ENCODE measurements at regions of chr5 and their contacts with region 1.

Region 1: DNA sequence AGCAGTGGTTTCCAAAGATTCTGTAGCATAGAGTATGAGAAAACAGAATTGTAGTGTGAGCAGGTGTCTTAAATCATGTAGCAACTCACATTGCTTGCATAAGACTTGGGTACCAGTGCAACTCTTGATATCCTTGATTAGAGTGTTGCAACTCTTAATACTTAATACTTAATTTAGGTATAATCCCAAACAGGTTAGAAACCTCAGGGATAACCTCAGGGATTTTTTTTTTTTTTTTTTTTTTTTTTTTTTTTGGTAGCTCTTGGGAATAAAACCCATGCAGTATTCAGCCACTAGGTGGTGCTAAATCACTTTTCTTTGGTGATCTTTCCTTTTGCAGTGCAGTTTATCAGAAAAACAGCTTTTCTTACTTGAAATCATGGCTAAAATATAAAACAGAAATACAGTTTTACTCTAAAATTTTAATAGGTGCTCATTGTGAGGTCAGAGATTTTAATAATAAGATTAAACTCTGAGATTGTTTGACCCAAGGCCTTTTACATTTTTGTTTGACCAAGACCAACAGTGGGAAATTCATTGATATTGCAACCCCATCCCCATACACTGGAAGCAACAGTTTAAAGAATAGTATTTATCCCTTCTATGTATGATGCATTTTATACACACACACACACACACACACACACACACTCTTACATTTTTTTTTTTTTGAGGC is 55.3 kb downstream of the ERAP1 start:
- DNase-seq: peak; percentile 54
- H3K4me3 Mint-ChIP-seq: no peak overlapping the region
- H3K27ac Mint-ChIP-seq: peak overlapping the region; percentile 25
- H3K4me1 Mint-ChIP-seq: peaks cover 25% of the 10 kb centered on the region
- H3K27me3 Mint-ChIP-seq: no peaks in the 10 kb centered on the region

Region 2: GRCh38 chr5:96771395-96771794 is 18.9 kb after region 1 on chr5:
- CTCF ChIA-PET with region 1: interaction called, 11 read pairs
- intact Hi-C with region 1: no loop called
- DNase-seq: no peak
- H3K4me3 Mint-ChIP-seq: no peak overlapping the region
- H3K27ac Mint-ChIP-seq: peak overlapping the region; percentile 79
- H3K4me1 Mint-ChIP-seq: peaks cover 13% of the 10 kb centered on the region
- H3K27me3 Mint-ChIP-seq: no peaks in the 10 kb centered on the region

Region 3: GRCh38 chr5:96823900-96824351 is 71.4 kb after region 1 on chr5:
- CTCF ChIA-PET with region 1: interaction called, 3 read pairs
- intact Hi-C with region 1: loop called (anchors 1 kb)
- DNase-seq: peak; percentile 20
- H3K4me3 Mint-ChIP-seq: no peak overlapping the region
- H3K27ac Mint-ChIP-seq: no peak overlapping the region
- H3K4me1 Mint-ChIP-seq: peaks cover 40% of the 10 kb centered on the region
- H3K27me3 Mint-ChIP-seq: no peaks in the 10 kb centered on the region

Region 4: GRCh38 chr5:97044052-97044451 is 291.6 kb after region 1 on chr5:
- CTCF ChIA-PET with region 1: no interaction called
- intact Hi-C with region 1: loop called (anchors 1 kb)
- DNase-seq: no peak
- H3K4me3 Mint-ChIP-seq: no peak overlapping the region
- H3K27ac Mint-ChIP-seq: no peak overlapping the region
- H3K4me1 Mint-ChIP-seq: no peaks in the 10 kb centered on the region
- H3K27me3 Mint-ChIP-seq: no peaks in the 10 kb centered on the region

Region 5: DNA sequence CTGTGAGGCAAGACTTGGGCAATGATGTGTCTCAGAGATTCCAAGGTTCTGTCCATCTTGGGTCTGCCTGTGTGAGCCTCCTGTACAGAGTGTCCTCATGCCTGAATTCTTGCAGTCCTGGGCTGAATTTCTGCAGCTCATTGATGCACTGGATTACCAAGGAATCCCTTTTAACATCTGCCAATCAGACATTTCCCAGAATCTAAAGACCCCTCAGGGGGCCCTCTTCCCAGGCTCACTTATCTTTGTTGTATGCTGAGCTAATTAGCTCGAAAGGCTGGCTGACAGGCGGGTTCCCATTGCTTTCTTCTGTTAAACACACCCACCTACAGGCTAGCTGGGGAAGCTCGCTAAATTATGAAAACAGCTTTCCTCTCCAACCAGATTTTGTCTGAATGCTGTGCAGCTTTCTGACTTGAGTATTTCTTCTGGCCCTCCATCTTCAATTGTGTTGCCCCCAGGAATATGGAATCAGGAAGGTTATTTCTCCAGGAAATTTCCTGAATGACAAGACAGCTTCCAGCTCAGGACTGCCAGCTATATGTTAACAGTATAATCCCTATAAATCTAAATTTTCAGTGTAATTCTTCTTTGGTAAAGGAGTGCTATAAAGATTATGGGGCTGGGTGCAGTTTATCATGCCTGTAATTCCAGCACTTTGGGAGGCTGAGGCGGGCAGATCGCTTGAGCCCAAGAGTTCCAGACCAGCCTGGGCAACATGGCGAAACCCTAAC is 390.2 kb after region 1 on chr5 and contains the start of gene LIX1:
- CTCF ChIA-PET with region 1: interaction called, 15 read pairs
- intact Hi-C with region 1: loop called (anchors 1 kb)
- DNase-seq: peak; percentile 60
- H3K4me3 Mint-ChIP-seq: no peak within 1 kb of the TSS
- H3K27ac Mint-ChIP-seq: no peak within 1 kb of the TSS
- H3K4me1 Mint-ChIP-seq: no peaks in the 10 kb centered on the region
- H3K27me3 Mint-ChIP-seq: peaks cover 6% of the 10 kb centered on the region
- total RNA-seq, gene LIX1: not detected

Region 6: DNA sequence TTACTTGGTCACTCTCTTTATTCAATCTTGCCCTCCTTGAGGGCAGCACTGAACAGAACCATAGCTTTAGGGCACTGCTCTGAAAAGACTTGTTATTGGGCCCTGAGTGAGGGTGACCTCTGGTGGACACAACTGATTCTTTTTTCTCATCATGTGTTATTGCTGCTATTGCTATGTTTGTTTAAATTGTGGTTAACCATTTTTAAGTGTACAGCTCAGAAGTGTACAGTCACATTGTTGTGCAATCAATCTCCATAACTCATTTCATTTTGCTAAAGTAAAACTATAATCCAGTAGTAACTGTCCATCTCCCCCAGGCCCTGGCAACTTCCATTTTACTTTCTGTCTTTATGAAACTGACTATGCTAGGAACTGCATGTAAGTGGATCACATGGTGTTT is 781.7 kb after region 1 on chr5:
- CTCF ChIA-PET with region 1: no interaction called
- intact Hi-C with region 1: loop called (anchors 10 kb)
- DNase-seq: peak; percentile 18
- H3K4me3 Mint-ChIP-seq: no peak overlapping the region
- H3K27ac Mint-ChIP-seq: no peak overlapping the region
- H3K4me1 Mint-ChIP-seq: no peaks in the 10 kb centered on the region
- H3K27me3 Mint-ChIP-seq: no peaks in the 10 kb centered on the region

Measured in activated naive CD4-positive, alpha-beta T cell treated with anti-CD3 and anti-CD28 coated beads for 36 hours (primary cell).